Mammary epithelial cell (primary cell): ENCODE measurements at regions of chr2 and their contacts with region 1.

Region 1: DNA sequence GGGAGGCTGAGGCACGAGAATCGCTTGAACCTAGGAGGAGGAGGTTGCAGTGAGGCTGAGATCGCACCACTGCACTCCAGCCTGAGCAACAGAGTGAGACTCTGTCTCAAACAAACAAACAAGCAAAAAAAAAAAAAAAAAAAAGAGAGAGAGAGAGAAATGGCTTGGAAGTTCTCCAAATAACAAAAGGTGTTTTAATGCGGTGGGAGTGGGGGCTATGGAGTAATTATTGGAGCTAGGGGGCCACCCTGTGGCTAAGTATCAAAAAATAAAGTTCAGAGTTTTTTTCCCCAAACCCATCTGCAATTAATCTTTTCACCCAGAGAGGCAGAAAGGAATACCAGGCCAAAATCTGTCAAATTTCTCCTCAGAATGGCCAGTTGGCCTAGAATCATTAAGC is 23.0 kb upstream of the CEP68 start:
- DNase-seq: no peak
- H3K4me3 ChIP-seq: no peak overlapping the region
- H3K27ac ChIP-seq: no peak overlapping the region
- H3K4me1 ChIP-seq: no peaks in the 10 kb centered on the region
- H3K27me3 ChIP-seq: no peaks in the 10 kb centered on the region
- CTCF ChIP-seq: peak; percentile 8 to 12

Region 2: GRCh38 chr2:64922482-64923384 is 110.4 kb before region 1 on chr2:
- CTCF ChIA-PET with region 1: no interaction called
- dilution Hi-C with region 1: loop called (anchors 5 kb)
- in situ Hi-C with region 1: no loop called
- intact Hi-C with region 1: loop called (anchors 1 kb)
- DNase-seq: no peak
- H3K4me3 ChIP-seq: no peak overlapping the region
- H3K27ac ChIP-seq: no peak overlapping the region
- H3K4me1 ChIP-seq: peaks cover 2% of the 10 kb centered on the region
- H3K27me3 ChIP-seq: no peaks in the 10 kb centered on the region
- CTCF ChIP-seq: no peak